Common myeloid progenitor, CD34-positive (primary cell): ENCODE measurements at regions of chr2 and their contacts with region 1.

Region 1: DNA sequence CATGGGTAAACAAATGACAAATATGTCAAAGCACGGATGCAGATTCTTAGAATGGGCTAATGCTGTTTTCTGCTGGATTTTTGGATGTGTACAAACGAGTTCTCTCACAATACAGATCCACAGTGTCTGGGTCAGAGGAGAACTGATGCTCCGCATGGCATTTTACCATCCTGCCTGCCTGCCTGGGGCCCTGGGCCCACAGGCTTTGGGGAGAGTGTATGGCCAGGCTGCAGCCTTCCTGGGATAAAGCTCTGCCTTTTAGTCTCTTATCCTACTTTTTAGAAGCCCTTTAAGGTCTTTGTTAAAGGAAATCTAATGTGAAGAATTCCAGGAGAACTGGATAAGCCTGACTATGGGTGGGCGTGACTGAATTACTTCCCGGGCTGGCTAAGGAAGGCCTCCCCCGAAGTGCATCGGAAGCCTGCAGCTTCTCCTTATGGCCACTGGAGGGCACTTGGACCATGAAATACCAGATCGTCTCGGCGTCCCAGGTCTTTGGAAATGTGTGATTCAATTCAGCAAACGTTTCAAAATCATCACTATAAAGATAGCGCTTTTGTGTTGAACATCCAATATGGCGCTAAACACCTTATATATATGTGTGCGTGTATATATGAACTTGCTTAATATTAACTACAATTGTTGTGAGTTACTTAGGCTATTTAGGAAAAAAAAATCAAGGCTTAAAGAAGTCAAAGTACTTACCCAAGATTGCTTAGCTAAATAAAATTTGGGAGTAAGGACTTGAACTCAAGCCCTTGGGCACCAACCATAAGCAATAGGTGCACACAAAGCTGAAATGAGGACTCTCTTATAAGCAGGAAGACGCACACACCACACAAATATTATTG is 15.2 kb upstream of the DNPEP start:
- DNase-seq: peak; percentile 69 to 85 (median 80)
- H3K4me3 ChIP-seq: no peak overlapping the region
- H3K27ac ChIP-seq: no peak overlapping the region
- H3K4me1 ChIP-seq: no peaks in the 10 kb centered on the region
- H3K27me3 ChIP-seq: peaks cover 0 to 7% (median 0%) of the 10 kb centered on the region in 5 experiments

Region 2: DNA sequence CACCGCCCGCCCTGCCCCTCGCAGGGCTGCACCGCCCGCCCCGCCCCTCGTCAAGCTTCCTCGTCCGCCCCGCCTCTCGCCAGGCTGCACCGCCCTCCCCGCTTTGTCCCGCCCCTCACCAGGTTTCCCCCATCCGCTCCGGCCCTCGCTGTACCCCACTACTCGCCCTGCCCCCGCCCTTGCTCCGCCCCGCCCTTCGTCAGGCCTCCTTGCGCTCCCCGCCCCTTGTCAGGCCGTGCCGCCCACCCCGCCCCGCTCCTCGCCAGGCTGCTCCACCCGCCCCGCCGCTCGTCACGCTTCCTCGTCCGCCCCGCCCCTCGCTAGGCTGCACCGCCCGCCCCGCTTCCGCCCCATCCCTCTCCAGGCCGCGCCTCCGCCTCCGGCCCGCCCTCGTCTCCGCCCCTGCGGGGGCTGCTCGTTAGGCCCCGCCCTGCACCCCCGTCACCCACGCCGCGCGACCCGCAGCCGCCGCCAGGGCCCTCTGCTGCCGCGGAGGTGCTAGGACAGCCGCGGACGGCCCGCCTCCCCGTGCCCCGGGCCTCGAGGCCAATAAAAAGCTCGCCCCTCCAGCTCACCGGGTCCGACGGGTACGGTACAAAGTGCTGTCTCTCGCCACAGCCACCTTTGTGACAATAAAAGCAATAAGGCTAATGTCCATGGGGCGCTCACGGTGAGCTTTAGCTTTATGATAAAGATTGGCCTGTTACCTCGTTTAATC is 14.6 kb before region 1 on chr2:
- CTCF ChIA-PET with region 1: interaction called, 67 read pairs
- POLR2A ChIA-PET with region 1: interaction called, 3 read pairs
- DNase-seq: peak; percentile 97 to 98 (median 98)
- H3K4me3 ChIP-seq: peak overlapping the region in 6 of 7 experiments; percentile 0 to 66 (median 44)
- H3K27ac ChIP-seq: peak overlapping the region in 1 of 2 experiments; percentile 46
- H3K4me1 ChIP-seq: peaks cover 0 to 16% (median 12%) of the 10 kb centered on the region in 4 experiments
- H3K27me3 ChIP-seq: no peaks in the 10 kb centered on the region

Region 3: DNA sequence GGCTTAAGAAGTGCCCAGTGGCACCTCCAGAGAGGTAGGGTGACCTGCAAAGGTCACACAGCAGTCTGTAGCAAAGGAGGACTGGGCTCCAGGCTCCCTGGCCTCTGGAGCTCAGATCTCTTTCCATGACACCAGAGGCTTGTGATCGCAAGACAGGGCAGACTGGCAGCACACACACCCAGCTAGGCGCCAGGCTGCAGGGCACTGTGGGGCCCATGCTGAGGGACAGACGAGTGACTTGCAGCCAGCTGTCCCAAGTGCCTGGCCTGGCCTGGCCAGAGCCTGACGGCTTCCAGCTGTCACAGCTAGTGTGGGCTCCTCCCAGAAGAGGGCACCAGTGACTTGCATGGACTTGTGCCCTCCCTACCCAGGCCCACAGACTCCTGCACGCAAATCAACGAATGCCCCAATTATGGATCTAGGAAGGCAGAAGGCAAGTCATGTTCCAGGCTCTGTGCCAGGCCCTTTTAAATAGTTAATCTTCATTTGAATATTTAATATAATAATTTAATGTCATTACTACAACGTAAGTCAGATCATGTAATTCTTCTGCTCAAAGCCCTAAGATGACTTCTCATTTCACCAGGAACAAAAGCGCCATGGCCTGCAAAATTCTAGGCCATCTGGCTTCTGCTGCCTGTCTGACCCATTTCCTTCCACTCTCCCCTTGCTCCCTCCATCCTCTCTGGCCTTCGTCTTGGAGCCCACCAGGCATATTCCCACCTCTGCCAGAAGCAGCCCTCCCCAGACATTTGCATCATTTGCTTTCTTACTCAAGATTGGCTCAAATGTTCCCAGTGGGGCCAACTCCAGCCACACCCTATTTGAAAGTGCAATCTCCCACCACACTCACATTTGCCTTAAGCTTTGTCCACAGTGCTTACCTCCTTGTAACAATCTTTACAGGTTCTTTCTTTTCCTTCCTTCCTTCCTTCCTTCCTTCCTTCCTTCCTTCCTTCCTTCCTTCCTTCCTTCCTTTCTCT is 28.0 kb after region 1 on chr2:
- CTCF ChIA-PET with region 1: interaction called, 52 read pairs
- POLR2A ChIA-PET with region 1: no interaction called
- DNase-seq: peak in 2 of 3 donors; percentile 32 to 38
- H3K4me3 ChIP-seq: no peak overlapping the region
- H3K27ac ChIP-seq: no peak overlapping the region
- H3K4me1 ChIP-seq: peaks cover 0 to 9% (median 6%) of the 10 kb centered on the region in 4 experiments
- H3K27me3 ChIP-seq: peaks cover 0 to 34% (median 24%) of the 10 kb centered on the region in 5 experiments

Region 4: DNA sequence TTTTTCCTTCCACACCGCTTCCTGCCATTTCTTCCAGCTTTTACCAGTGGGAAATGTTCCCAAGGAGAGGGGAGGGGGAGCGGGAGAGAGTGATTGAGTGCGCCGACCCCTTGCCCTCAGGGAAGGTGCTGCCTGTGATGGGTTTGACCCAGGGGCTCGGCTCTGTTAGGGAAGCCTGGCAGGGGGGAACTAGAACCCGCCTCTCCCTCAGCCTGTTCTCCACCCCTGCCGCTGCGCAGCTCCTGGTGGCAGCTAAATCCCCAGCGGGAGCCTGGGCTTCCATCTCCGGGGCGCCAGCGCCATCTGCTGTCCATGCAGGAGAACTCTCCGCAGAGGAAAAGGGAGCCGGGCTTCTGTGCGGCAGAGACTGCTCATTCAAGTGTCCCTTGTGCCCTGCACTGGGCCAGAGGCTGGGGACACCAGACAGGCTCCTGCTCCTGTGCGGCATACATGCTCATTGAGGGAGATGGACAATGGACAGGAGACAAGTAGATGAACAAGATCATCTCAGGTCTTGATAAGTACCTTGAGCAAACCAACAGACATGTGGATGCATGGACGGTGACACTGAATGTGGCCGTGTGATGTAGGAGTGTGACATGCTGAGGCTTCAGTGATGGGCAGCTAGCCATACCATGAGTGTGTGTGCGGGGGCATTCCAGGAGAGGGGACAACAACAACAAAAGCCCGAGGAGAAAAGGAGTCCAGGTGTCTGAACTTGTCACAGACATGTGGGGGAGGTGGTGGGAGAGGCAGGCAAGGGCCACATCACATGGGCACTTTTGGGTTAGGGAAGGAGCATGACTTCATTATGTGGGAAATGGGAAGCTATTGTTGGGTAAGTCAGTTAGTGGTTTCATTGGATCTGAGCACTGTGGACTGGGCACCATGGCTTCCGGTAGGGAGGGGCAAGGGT is 127.4 kb after region 1 on chr2:
- CTCF ChIA-PET with region 1: interaction called, 99 read pairs
- POLR2A ChIA-PET with region 1: no interaction called
- DNase-seq: peak; percentile 84 to 92 (median 89)
- H3K4me3 ChIP-seq: no peak overlapping the region
- H3K27ac ChIP-seq: no peak overlapping the region
- H3K4me1 ChIP-seq: peaks cover 0 to 7% (median 3%) of the 10 kb centered on the region in 4 experiments
- H3K27me3 ChIP-seq: peaks cover 4 to 71% (median 38%) of the 10 kb centered on the region in 5 experiments